A673 (cell line): ENCODE measurements at regions of chr14 and their contacts with region 1.

Region 1: DNA sequence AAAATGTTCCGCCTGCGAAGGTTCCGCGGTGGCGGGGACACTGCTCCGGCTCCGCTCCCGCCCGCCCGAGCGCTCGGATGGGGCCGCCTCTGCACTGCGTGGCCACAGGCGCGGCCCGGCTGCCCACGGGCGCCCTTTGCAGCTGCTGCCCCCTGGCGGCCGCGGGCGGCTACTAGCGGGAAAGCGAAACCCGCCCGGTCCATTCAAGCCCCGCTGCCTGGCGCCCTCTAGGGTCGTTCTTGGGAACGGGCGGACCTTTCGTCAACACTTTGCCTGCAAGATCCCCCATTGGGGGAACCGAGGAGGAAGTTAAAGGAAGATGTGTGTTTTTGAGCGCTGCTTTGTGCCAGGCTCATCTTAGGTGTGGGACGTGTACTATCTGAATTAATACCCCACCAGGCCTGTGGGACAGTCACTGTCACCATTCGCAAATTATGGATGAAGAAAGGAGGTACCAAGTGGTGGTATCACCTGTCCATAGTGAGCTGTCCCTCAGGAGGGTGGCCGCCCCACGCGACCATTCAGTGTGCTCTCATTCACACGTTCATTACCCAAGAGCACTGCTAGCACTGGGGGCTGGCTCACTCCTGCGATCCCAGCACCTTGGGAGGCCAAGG is 19.4 kb downstream of the GPR132 start:
- DNase-seq: peak; percentile 90
- H3K4me3 ChIP-seq: no peak overlapping the region
- H3K27ac ChIP-seq: no peak overlapping the region
- H3K4me1 ChIP-seq: no peaks in the 10 kb centered on the region
- H3K27me3 ChIP-seq: no peaks in the 10 kb centered on the region
- CTCF ChIP-seq: peak; percentile 99

Region 2: DNA sequence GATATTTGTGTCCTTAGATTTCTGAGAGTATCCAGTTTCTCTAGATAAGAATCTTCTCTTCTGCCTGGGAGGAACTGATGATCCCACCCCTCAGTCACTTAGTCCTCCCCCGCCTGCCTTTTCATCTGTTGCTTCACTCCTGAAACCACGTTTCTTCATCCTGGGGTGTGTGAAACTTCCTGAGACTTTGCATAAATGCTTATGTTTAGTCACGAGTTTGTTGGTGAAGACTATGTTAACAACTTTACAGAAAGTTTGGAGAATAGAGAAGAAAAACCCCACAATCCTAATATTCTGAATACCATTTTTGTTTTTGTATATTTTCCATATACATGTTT is 1627.4 kb before region 1 on chr14:
- CTCF ChIA-PET with region 1: no interaction called
- POLR2A ChIA-PET with region 1: interaction called, 18 read pairs
- intact Hi-C with region 1: no loop called
- DNase-seq: peak; percentile 67
- H3K4me3 ChIP-seq: no peak overlapping the region
- H3K27ac ChIP-seq: peak overlapping the region; percentile 53
- H3K4me1 ChIP-seq: peaks cover 26% of the 10 kb centered on the region
- H3K27me3 ChIP-seq: no peaks in the 10 kb centered on the region
- CTCF ChIP-seq: no peak

Region 3: DNA sequence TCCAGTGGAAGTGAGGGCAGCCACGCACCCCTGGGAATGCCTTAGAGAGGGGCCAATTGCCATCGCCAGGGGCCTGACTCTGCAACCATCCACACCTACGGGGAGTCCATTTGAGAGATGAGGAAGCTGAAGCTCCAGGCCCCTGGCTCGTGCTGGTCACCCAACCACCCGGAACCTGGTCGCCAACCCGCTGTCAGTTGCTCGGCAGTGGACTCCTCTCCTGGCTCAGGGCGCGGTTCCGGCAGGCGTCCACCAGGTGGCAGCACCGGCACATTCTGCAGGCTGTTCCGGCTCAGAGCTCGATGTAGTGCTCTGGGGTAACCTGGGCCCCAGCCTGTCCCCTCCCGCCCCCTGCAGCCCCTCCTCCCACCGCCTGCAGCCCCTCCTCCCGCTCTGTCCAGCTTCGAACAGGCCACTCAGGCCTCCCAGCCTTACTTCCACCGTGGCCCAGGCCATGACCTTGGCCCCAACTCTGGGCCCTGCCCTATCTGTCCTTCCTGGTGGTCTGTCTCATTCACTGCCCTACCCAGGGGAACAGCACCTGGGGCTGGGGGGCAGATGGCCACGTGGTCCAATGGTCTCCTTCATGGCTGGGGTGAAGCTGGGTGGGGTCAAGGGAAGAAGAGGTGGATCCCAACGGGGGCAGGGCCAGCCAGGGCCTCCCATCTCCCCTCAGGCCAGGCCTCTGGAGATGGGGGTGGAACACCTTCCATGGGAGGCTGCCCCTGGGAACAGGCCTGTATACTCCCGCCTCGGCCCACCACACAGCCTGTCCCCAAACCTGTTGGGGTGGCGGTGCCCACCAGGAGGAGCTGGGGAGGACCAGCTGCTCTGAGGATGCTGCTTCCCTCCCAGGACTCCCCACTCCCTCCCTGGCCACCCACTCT is 277.1 kb before region 1 on chr14:
- CTCF ChIA-PET with region 1: no interaction called
- POLR2A ChIA-PET with region 1: no interaction called
- intact Hi-C with region 1: loop called (anchors 5 kb)
- DNase-seq: peak; percentile 87
- H3K4me3 ChIP-seq: no peak overlapping the region
- H3K27ac ChIP-seq: peak overlapping the region; percentile 40
- H3K4me1 ChIP-seq: peaks cover 5% of the 10 kb centered on the region
- H3K27me3 ChIP-seq: no peaks in the 10 kb centered on the region
- CTCF ChIP-seq: peak; percentile 86

Region 4: GRCh38 chr14:104895786-104896661 is 149.8 kb before region 1 on chr14:
- CTCF ChIA-PET with region 1: no interaction called
- POLR2A ChIA-PET with region 1: no interaction called
- intact Hi-C with region 1: loop called (anchors 2 kb)
- DNase-seq: peak; percentile 63
- H3K4me3 ChIP-seq: no peak overlapping the region
- H3K27ac ChIP-seq: no peak overlapping the region
- H3K4me1 ChIP-seq: no peaks in the 10 kb centered on the region
- H3K27me3 ChIP-seq: no peaks in the 10 kb centered on the region
- CTCF ChIP-seq: no peak

Region 5: DNA sequence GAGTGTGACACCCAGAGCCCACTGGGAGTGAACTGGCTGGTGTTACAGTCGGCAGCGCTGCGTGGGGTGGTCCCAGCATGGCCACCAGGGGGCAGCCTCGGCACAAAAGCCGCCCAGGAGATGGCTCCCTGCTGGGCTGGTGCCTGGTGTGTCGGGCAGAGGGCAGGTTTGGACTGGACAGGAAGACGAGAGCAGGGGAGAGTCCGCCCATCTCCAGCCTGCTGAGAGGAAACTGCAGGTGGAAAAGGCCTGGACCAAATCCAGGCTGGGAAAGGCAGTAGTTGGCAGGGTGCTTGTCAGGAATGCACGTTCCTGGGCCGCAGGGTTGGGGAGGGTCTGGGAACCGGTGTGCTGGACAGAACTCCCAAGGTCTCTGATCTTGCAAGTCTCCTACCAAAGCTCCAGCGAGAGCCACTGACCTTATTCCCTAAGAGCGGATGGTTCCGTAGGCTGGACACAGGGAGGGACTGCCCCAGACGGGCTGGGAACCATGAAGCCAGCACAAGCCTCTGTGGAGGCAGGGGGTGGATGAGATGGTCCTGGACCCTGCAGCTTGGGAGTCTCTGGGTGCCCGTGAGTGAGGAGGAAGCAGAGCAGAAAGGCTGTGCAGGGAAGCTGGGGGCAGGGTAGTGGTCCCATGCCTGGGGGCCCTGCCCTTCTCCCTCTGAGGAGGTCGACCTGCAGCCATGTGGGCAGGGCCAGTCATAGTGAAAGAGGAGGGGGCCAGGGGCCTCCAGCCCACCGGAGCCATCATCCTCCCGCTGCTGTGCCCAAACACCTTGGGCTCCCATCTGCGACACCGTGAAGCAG is 69.4 kb before region 1 on chr14:
- CTCF ChIA-PET with region 1: interaction called, 13 read pairs
- POLR2A ChIA-PET with region 1: no interaction called
- intact Hi-C with region 1: loop called (anchors 1 kb)
- DNase-seq: peak; percentile 76
- H3K4me3 ChIP-seq: no peak overlapping the region
- H3K27ac ChIP-seq: no peak overlapping the region
- H3K4me1 ChIP-seq: peaks cover 8% of the 10 kb centered on the region
- H3K27me3 ChIP-seq: no peaks in the 10 kb centered on the region
- CTCF ChIP-seq: peak; percentile 87

Region 6: DNA sequence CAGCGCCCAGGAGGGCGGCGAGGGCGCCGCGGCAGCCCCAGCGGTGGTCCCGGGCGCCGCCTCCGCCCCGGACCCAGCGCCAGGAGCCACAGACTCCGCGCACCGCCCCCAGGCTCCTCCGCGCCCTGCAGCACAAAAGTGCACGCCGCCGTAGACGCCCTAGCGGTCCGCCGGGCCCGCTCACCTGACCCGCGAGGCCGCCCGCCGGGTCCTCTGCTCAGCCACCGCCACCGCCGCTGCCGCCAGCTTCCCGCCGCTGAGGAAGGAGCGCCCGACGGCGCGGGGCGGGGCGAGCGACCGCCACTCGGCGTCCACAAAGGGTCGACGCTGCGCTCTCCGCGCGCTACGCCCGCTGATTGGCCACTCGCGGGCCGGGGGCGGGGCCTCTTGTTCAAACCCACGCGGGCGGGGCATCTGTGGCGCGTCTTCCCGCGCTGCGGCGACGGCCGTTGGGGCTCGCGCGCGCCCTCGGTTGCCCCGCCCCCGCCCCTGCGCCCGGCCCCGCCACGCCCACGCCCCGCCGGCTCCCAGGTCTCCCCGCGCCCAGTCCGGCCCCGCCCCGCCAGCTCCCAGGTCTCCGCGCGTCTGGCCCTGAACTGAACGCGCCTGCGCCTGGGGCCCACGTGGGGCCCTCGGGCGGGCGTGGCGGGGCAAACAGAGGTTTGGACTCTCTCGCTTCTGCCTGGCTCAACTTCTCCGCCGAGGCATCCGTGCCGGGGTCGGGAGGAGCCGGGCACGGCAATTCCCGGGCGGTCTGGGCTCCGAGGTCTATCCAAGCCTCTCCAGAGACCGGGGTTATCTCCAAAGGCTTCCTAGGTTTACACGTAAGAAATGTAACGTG is 24.8 kb before region 1 on chr14 and contains the start of gene CDCA4:
- CTCF ChIA-PET with region 1: interaction called, 14 read pairs
- POLR2A ChIA-PET with region 1: no interaction called
- intact Hi-C with region 1: no loop called
- DNase-seq: peak; percentile 97
- H3K4me3 ChIP-seq: peak within 1 kb of the TSS; percentile 99
- H3K27ac ChIP-seq: peak within 1 kb of the TSS; percentile 99
- H3K4me1 ChIP-seq: peaks cover 39% of the 10 kb centered on the region
- H3K27me3 ChIP-seq: no peaks in the 10 kb centered on the region
- CTCF ChIP-seq: no peak
- total RNA-seq, gene CDCA4: 49.7 and 51.1 TPM in 2 replicates